Breast epithelium (tissue), 4 donors: ENCODE measurements at regions of chr2 and their contacts with region 1.

Region 1: DNA sequence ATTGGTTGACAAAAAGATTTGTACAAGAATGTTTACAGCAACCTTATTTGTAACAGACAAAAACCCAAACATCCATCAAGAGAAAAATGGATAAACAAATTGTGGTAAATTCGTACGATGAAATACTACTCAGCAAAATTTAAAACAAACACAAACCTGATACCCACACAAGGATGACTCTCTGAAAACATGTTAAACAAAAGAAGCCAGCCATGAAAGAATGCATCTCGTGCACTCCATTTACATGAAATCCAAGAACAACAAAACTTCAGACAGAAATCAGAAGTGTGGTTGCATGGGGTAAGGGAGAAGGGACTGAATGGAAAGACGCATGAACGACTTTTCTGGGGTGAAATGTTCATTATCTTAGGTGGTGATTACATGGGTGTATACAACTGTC is 93.4 kb downstream of the SLC25A12 start:
- DNase-seq: no peak
- H3K4me3 ChIP-seq: no peak overlapping the region
- H3K27ac ChIP-seq: no peak overlapping the region
- H3K4me1 ChIP-seq: no peaks in the 10 kb centered on the region
- H3K27me3 ChIP-seq: no peaks in the 10 kb centered on the region
- CTCF ChIP-seq: no peak
- POLR2A ChIP-seq: no peak

Region 2: DNA sequence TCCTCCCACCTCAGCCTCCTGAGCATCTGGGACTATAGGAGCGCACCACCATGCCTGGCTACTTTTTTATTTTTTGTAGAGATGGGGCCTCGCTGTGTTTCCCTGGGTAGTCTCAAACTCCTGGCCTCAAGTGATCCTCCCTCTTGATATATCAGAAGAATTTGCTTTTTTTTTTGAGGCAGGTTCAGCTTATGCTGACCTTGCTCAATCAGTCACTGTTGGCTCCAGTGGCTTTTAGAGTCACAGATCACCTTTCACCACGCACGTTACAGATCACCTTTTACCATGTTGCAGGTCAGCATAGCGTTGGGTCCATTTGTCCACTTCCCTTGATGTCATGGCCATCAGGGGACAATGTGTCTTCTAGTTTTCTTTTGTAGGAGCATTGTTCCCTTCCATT is 330.5 kb before region 1 on chr2:
- intact Hi-C with region 1: loop called (anchors 5 kb)
- DNase-seq: no peak
- H3K4me3 ChIP-seq: no peak overlapping the region
- H3K27ac ChIP-seq: no peak overlapping the region
- H3K4me1 ChIP-seq: no peaks in the 10 kb centered on the region
- H3K27me3 ChIP-seq: no peaks in the 10 kb centered on the region
- CTCF ChIP-seq: no peak
- POLR2A ChIP-seq: no peak